ENCODE measurements at regions of chr7 and their contacts with region 1.

Region 1: GRCh38 chr7:32204361-32205018 is 134.3 kb upstream of the PDE1C start:
- DNase-seq: peak; percentile 90
- H3K4me3 ChIP-seq: peak overlapping the region; percentile 52
- H3K27ac ChIP-seq: no peak overlapping the region
- H3K4me1 ChIP-seq: no peaks in the 10 kb centered on the region
- H3K27me3 ChIP-seq: peaks cover 19% of the 10 kb centered on the region

Region 2: GRCh38 chr7:31134246-31135188 is 1070.0 kb before region 1 on chr7:
- in situ Hi-C with region 1: loop called (anchors 25 kb)
- DNase-seq: peak; percentile 81
- H3K4me3 ChIP-seq: no peak overlapping the region
- H3K27ac ChIP-seq: no peak overlapping the region
- H3K4me1 ChIP-seq: no peaks in the 10 kb centered on the region
- H3K27me3 ChIP-seq: peaks cover 7% of the 10 kb centered on the region

Region 3: DNA sequence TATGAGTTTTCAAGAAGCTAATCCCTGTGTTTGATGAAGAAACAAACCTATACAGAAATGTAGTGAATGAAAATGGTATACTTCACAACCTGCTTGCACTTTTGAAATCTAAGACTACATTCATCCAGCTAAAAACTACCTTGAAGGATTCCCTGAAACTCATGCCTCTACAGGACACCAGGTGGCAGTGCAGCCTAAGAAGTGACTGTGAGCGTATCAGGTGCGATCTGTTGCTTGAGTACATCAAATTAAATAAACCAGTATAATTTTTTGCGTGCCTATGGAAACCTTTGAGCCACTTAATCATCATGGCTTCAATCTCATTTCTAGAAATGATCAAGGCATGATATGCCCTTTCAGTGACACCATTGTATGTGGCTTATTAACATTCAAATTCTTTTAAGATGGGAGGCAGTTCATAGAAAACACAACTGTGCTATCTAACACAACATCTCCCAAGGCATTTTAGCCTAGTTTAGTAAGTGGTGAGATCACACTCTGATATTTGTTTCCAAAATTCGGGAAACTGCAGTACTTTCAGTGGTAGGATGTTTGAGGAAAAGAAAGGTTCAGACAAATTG is 460.1 kb before region 1 on chr7:
- in situ Hi-C with region 1: loop called (anchors 5 kb)
- DNase-seq: peak; percentile 80
- H3K4me3 ChIP-seq: no peak overlapping the region
- H3K27ac ChIP-seq: no peak overlapping the region
- H3K4me1 ChIP-seq: peaks cover 3% of the 10 kb centered on the region; the same call in 1 of the 2 replicates
- H3K27me3 ChIP-seq: peaks cover 6% of the 10 kb centered on the region; the same call in 1 of the 2 replicates